Cardiac septum (tissue), 1 donor: ENCODE measurements at regions of chr7 and their contacts with region 1.

Region 1: DNA sequence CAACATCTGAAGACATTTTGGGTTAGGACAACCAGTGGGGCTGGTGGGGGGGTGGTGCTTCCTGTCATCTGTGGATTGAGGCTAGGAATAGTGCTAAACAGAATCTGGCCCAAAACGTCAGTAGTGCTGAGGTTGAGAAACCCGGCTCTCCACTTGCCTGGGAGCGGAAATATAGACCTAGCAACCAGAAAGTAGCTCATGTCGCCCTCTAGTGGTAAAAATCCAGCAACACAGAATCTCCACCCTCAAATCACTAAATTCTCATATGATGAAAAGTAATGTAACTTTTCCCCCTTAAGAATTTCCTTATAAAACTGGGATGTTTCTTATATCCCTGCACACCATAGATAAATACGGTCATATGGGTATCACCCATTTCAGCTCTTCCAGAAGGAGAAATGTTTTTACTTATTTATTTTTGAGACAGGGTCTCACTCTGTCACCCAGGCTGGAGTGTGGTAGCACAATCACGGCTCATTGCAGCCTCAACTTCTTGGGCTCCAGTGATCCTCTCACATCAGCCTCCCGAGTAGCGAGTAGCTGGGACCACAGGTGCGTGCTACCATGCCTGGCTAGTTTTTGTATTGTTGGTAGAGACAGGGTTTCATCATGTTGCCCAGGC is 34.4 kb downstream of the ZC3HAV1 start:
- DNase-seq: no peak

Region 2: GRCh38 chr7:138886501-138886917 is 188.6 kb before region 1 on chr7:
- intact Hi-C with region 1: loop called (anchors 10 kb)
- DNase-seq: no peak

Region 3: DNA sequence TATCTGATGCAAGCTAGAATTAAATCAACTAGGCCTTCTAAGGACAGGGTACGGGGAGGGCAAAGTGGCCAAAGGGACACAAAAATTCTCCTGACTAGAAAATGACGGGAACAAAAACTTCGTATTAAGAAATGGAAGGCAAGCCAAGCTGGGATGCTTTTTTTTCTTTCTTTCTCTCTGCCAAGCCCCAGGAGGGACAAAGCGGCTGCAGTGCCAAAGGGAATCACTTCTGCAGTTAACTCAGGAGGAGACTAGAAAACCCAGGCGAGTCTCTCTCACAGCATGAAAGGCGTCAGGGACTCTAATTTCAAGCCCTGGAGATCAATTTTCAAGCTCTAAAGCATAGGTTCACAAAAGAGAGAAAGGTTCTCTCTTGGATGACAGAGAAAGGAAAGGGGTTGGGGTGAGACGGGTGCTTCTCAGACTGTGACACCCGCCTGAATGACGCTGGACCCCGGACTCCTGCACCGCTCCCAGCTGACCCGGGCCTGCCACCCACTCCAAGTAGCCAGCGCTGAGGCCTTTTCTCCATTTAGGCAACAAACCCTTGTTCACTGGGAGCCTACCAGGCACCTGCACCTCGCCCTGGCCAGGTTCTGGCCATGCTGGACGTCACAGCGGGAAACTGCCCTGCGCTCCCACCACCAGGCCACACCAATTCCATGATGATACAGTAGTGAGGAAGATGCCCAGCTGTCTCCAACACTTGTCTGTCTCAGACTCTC is 150.5 kb before region 1 on chr7:
- intact Hi-C with region 1: no loop called
- DNase-seq: no peak

Region 4: DNA sequence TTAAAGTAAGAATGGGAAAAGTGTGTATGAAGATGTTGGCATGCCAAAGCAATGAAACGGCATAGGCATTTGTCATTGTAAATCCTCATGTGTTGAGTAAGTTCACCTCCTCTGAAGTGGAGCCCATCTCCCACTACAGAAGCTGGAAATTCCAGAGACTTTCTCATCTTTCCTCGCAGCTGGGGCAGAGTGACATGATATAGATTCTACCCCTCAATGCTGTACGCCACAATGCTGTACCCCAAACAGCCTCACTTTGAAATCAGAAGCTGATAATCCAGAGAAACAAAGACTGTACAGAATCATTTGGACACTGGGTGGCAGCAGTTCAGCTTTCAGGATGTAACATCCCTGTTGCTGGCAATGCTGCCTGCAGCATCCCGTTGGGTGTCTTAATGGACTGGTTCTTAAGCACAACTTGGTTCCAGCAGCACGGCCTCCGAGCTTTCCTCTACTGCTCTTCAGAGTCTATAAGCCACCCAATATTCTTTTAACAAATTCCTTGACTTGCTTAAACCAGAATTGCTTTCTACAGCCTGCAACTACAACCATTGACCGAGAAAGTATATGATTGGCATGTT is 58.1 kb before region 1 on chr7:
- intact Hi-C with region 1: loop called (anchors 2 kb)
- DNase-seq: no peak